MCF 10A (cell line): ENCODE measurements at regions of chr2 and their contacts with region 1.

Region 1: GRCh38 chr2:242088471-242089212 is 219.1 kb downstream of the RTP5 start:
- DNase-seq: peak; percentile 85
- H3K4me3 Mint-ChIP-seq: peak overlapping the region; percentile 89
- H3K27ac Mint-ChIP-seq: peak overlapping the region; percentile 96
- H3K4me1 Mint-ChIP-seq: peaks cover 22% of the 10 kb centered on the region
- H3K27me3 Mint-ChIP-seq: no peaks in the 10 kb centered on the region
- CTCF ChIP-seq: no peak

Region 2: GRCh38 chr2:241950413-241951315 is 138.0 kb before region 1 on chr2:
- CTCF ChIA-PET with region 1: no interaction called
- POLR2A ChIA-PET with region 1: no interaction called
- intact Hi-C with region 1: loop called (anchors 5 kb)
- DNase-seq: peak; percentile 68
- H3K4me3 Mint-ChIP-seq: no peak overlapping the region
- H3K27ac Mint-ChIP-seq: no peak overlapping the region
- H3K4me1 Mint-ChIP-seq: no peaks in the 10 kb centered on the region
- H3K27me3 Mint-ChIP-seq: peaks cover 33% of the 10 kb centered on the region
- CTCF ChIP-seq: peak; percentile 90

Region 3: GRCh38 chr2:242020196-242021004 is 68.2 kb before region 1 on chr2:
- CTCF ChIA-PET with region 1: no interaction called
- POLR2A ChIA-PET with region 1: no interaction called
- intact Hi-C with region 1: no loop called
- DNase-seq: no peak
- H3K4me3 Mint-ChIP-seq: no peak overlapping the region
- H3K27ac Mint-ChIP-seq: no peak overlapping the region
- H3K4me1 Mint-ChIP-seq: no peaks in the 10 kb centered on the region
- H3K27me3 Mint-ChIP-seq: peaks cover 67% of the 10 kb centered on the region
- CTCF ChIP-seq: no peak